Panc1 (cell line): ENCODE measurements at regions of chr1 and their contacts with region 1.

Region 1: DNA sequence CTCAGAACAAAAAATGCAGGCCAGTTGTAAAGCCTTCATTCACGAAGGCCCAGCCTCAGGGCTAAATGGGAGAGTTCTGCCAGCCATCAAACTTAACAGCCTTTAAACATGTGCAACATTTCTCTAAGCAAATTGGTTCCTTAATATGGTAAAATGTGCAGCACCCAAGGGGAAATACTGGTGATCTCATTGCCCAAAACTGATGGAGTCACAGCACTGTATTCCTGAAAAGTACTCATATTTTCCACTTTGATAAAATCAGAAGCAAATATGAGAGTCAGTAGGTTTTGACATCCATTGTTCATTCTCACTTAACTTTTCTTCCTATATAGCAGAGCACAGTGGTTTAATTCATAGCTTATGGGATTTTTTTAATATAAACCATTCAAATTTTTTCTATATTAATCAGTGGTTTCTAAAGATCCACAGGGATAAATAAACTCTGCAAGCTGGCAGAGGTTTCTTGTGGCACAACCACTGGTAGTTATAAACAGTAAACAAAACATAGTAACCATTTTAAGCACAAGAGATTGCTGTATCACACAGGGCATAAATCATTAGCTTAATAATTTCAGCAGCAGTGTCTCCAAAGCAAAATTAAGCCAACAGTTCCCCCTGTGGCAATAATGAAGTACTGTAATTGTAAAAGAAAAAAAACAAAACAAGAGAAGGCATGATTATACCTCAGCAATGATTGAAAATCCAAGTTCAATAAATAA is 106.9 kb upstream of the LYPLAL1 start:
- DNase-seq: peak; percentile 36
- ATAC-seq: peak; percentile 71
- H3K4me3 ChIP-seq: no peak overlapping the region
- H3K27ac ChIP-seq: peak overlapping the region; percentile 63; the same call in 1 of the 2 replicates
- H3K4me1 ChIP-seq: peaks cover 5% of the 10 kb centered on the region; the same call in 1 of the 2 replicates
- H3K27me3 ChIP-seq: no peaks in the 10 kb centered on the region
- CTCF ChIP-seq: peak; percentile 65; the same call in 1 of the 2 replicates

Region 2: GRCh38 chr1:218361298-218362065 is 705.3 kb before region 1 on chr1:
- CTCF ChIA-PET with region 1: no interaction called
- POLR2A ChIA-PET with region 1: no interaction called
- in situ Hi-C with region 1: no loop called
- intact Hi-C with region 1: loop called (anchors 5 kb)
- DNase-seq: no peak
- ATAC-seq: peak; percentile 63
- H3K4me3 ChIP-seq: no peak overlapping the region
- H3K27ac ChIP-seq: peak overlapping the region; percentile 100
- H3K4me1 ChIP-seq: peaks cover 93% of the 10 kb centered on the region
- H3K27me3 ChIP-seq: no peaks in the 10 kb centered on the region
- CTCF ChIP-seq: peak; percentile 86

Region 3: DNA sequence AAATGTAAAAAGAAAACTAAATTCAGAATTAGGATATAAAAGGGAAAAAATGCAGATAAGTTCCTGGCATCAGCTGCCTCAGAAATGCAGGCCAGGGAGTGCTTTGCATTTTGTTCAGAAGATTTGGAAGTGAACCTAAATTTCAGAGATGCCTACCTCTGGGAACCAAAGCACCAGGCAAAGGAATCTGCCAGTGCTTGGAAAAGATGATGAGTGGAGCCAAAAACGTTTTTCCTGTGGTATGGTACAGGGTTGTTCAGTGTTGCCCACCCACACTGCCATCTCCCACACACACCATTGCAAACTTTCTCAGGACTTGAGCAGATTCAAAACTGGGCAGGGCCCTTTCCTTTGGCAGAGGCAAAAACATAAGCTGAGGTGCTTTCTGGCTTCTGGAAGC is 372.2 kb before region 1 on chr1:
- CTCF ChIA-PET with region 1: no interaction called
- POLR2A ChIA-PET with region 1: no interaction called
- in situ Hi-C with region 1: no loop called
- intact Hi-C with region 1: loop called (anchors 10 kb)
- DNase-seq: no peak
- ATAC-seq: no peak
- H3K4me3 ChIP-seq: no peak overlapping the region
- H3K27ac ChIP-seq: peak overlapping the region; percentile 58; the same call in 1 of the 2 replicates
- H3K4me1 ChIP-seq: peaks cover 9% of the 10 kb centered on the region; the same call in 1 of the 2 replicates
- H3K27me3 ChIP-seq: no peaks in the 10 kb centered on the region
- CTCF ChIP-seq: no peak